Colonic mucosa (tissue), 4 donors: ENCODE measurements at regions of chr5 and their contacts with region 1.

Region 1: DNA sequence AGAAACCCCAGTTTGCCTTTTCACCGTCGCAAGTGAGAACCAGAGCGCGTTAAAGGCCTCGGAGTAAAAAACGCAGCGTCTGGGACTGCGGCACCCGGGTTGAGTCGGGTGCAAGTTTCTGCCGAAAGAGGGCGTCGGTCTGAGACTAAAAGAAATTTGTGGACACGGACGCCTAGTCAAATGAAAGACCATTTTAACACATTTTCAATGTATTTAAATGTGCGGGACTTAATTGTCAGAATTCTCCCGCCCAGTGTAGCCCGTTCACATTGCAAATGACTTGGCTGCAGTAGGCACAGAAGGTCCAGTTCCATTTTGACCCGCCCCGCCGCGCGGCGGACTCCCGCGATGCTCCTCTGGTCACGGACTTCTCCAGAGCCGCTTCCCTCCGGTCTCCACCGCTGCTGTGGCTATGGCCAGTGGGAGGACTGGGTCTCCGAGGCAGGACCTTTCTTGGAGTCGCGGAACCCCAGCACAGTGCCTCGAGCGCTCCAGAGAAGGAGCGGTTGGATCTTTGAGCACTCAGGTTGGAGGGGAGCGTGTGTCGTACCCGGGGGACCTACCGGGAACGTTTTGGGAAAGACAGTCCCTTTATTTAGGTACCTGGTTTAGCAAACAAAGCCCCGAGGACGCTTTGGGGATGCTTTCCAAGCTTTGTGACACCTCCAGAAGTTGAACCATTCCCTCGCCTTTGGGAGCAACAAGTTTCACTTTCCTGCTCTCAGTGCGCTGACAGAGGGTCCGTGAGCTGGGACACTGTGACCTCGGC is 1.2 kb upstream of the NPR3 start:
- DNase-seq: peak; percentile 71
- H3K4me3 ChIP-seq: peak overlapping the region; percentile 58
- H3K27ac ChIP-seq: no peak overlapping the region
- H3K4me1 ChIP-seq: no peaks in the 10 kb centered on the region
- H3K27me3 ChIP-seq: peaks cover 32% of the 10 kb centered on the region
- CTCF ChIP-seq: peak; percentile 51

Region 2: GRCh38 chr5:32625106-32625505 is 84.9 kb before region 1 on chr5:
- intact Hi-C with region 1: no loop called
- DNase-seq: no peak
- H3K4me3 ChIP-seq: no peak overlapping the region
- H3K27ac ChIP-seq: no peak overlapping the region
- H3K4me1 ChIP-seq: no peaks in the 10 kb centered on the region
- H3K27me3 ChIP-seq: no peaks in the 10 kb centered on the region
- CTCF ChIP-seq: no peak

Region 3: DNA sequence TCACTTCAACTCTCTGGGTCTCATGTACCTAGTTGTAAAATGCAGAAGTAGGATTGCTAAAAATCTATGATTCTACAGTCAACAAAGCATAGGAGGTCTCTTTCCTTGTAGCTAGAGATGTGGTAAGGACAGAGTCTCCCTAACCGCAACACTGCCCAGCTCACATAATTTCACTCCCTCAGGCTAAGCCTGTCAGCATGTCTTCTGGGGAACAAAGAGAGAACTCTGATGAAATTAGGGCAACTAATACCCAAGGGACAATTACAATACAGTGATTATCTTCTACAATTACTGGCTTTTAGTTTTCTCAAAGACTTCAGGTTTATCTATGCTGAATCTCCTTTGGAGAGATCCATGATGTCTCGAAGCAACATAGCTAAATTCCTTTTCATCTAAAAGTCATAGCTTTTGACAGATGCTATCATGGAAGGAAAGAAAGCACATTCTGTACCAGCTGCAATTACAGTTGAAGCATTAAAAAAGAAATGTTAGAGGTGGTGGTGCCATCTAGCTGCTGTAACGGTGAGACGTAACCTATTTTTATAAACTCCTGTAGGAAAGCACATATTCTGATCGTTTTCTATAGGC is 589.8 kb after region 1 on chr5:
- intact Hi-C with region 1: loop called (anchors 5 kb)
- DNase-seq: no peak
- H3K4me3 ChIP-seq: no peak overlapping the region
- H3K27ac ChIP-seq: no peak overlapping the region
- H3K4me1 ChIP-seq: no peaks in the 10 kb centered on the region
- H3K27me3 ChIP-seq: no peaks in the 10 kb centered on the region
- CTCF ChIP-seq: peak; percentile 22

Region 4: GRCh38 chr5:33423018-33423630 is 713.2 kb after region 1 on chr5:
- intact Hi-C with region 1: loop called (anchors 5 kb)
- DNase-seq: no peak
- H3K4me3 ChIP-seq: no peak overlapping the region
- H3K27ac ChIP-seq: no peak overlapping the region
- H3K4me1 ChIP-seq: no peaks in the 10 kb centered on the region
- H3K27me3 ChIP-seq: no peaks in the 10 kb centered on the region
- CTCF ChIP-seq: peak; percentile 30